CD8-positive, alpha-beta T cell (primary cell): ENCODE measurements at regions of chr9 and their contacts with region 1.

Region 1: DNA sequence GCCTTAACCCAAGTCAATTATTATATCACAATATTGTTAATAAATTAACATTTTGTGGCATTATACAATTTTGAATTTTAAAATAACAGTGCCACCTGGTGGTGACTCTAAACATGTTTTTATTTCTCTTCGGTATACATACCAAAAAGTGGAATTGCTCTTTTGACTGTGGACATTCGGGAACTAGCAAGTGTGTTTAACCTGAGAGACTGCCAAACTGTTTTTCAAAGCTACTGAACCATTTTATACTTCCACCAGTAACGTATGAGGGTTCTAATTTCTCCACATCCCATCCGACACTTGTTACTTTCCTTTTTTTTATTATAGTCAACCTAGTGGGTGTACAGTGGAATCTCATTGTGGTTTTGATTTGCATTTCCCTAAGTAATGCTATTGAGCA is 18.3 kb upstream of the HSDL2 start:
- DNase-seq: peak in 3 of 9 experiments; percentile 40 to 67 (median 59)
- ATAC-seq: no peak
- H3K4me3 ChIP-seq: no peak overlapping the region
- H3K4me3 Mint-ChIP-seq: no peak overlapping the region
- H3K27ac ChIP-seq: no peak overlapping the region
- H3K27ac Mint-ChIP-seq: no peak overlapping the region
- H3K4me1 ChIP-seq: no peaks in the 10 kb centered on the region
- H3K4me1 Mint-ChIP-seq: peaks cover 4% of the 10 kb centered on the region
- H3K27me3 ChIP-seq: no peaks in the 10 kb centered on the region
- H3K27me3 Mint-ChIP-seq: peaks cover 2% of the 10 kb centered on the region
- CTCF ChIP-seq: peak; percentile 78

Region 2: DNA sequence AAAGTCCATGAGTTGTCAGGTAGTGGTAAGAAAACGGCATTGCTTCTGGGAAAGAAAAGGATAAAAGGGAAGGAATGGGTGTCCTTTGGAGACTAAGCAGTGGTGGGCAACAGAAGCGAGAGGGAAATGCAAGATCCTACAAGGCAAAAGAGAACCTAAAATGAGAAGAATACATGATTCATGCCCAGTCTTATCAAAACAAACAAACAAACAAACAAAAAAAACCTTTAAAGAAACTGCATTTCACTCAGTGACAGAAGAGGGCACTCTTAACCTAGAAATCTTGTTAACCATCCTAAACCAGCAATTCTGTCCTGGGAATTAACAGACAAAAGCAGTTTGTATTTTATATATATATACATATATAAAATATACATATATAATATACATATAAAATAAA is 275.0 kb before region 1 on chr9:
- CTCF ChIA-PET with region 1: interaction called, 22 read pairs
- POLR2A ChIA-PET with region 1: no interaction called
- intact Hi-C with region 1: loop called (anchors 1 to 2 kb)
- DNase-seq: peak in 2 of 9 experiments; percentile 31 to 42
- ATAC-seq: no peak
- H3K4me3 ChIP-seq: no peak overlapping the region
- H3K4me3 Mint-ChIP-seq: no peak overlapping the region
- H3K27ac ChIP-seq: no peak overlapping the region
- H3K27ac Mint-ChIP-seq: no peak overlapping the region
- H3K4me1 ChIP-seq: no peaks in the 10 kb centered on the region
- H3K4me1 Mint-ChIP-seq: no peaks in the 10 kb centered on the region
- H3K27me3 ChIP-seq: no peaks in the 10 kb centered on the region
- H3K27me3 Mint-ChIP-seq: no peaks in the 10 kb centered on the region
- CTCF ChIP-seq: peak; percentile 55

Region 3: DNA sequence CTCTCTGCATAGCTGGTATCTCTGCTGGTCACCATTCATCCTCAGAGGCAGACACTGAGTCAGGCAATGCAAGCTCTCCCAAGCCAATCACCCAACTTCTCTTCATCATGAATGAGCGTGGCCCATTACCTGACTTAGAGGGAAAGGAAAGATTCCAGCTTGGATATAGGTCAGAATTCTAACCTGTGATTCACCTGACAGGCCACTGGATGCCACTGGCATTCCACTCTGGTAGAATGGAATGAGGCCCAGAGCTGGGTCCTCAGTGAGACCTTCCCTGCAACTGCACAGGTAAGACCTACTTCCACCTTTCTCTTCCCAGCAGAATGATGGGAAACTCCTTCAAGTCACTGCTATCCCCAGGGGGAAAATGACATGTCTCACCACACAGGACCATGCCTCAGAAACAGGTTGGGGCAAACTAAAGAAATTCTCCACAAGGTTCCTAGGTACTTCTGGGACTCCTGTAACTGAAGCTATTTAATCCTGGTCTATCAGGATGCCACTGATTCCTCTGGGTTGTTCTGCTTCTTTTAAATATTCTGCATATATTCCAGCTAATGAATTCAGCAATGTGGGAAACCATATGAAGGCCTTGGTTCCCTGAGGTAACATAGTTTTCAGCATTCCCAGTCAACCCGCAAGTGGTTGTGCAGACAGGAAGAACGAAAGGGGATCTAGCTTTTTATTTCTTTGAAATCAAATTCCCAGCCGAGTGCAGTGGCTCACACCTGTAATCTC is 248.5 kb before region 1 on chr9:
- CTCF ChIA-PET with region 1: interaction called, 61 read pairs
- POLR2A ChIA-PET with region 1: no interaction called
- intact Hi-C with region 1: loop called (anchors 1 kb)
- DNase-seq: peak in 4 of 9 experiments; percentile 13 to 50 (median 36)
- ATAC-seq: peak; percentile 48
- H3K4me3 ChIP-seq: no peak overlapping the region
- H3K4me3 Mint-ChIP-seq: no peak overlapping the region
- H3K27ac ChIP-seq: no peak overlapping the region
- H3K27ac Mint-ChIP-seq: no peak overlapping the region
- H3K4me1 ChIP-seq: no peaks in the 10 kb centered on the region
- H3K4me1 Mint-ChIP-seq: no peaks in the 10 kb centered on the region
- H3K27me3 ChIP-seq: no peaks in the 10 kb centered on the region
- H3K27me3 Mint-ChIP-seq: no peaks in the 10 kb centered on the region
- CTCF ChIP-seq: peak; percentile 55

Region 4: DNA sequence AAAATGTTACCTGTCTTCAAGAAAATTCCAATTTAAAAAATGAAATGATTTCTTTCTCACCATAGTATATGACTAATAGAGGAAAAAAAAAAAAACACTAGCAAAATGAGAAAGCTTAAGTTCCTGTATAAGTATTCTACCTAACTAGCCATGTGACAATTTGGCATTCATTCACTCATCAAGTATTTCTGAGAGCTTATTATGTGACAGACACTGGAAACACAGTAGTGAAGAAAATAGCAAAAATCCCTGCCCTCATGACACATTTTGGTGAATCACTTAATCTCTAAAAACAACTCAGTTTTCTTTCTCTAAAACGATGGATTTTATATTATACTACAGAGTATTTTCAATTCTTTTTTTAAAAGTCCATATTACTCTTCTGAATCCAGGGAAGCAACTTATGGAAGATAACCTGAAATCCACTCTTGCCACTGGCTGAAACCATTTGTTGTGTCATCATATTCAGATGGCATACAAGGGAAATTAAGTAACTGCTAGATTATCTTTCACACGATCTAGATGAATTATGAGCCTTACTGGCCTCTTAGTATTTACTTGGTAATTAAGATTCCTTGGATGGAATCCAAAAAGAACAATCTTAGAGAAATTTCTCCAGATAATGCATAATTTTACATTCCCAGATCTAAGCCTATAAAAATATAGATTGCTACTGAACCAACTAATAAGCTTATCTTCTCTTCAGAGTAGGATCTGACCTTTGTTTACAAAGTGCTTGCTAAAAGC is 33.7 kb before region 1 on chr9:
- CTCF ChIA-PET with region 1: interaction called, 6 read pairs
- POLR2A ChIA-PET with region 1: interaction called, 4 read pairs
- intact Hi-C with region 1: loop called in 1 of 2 experiments (anchors 5 kb)
- DNase-seq: peak in 1 of 9 experiments; percentile 39
- ATAC-seq: no peak
- H3K4me3 ChIP-seq: no peak overlapping the region
- H3K4me3 Mint-ChIP-seq: peak overlapping the region; percentile 3
- H3K27ac ChIP-seq: peak overlapping the region in 1 of 2 experiments; percentile 8
- H3K27ac Mint-ChIP-seq: peak overlapping the region; percentile 39
- H3K4me1 ChIP-seq: peaks cover 25% of the 10 kb centered on the region
- H3K4me1 Mint-ChIP-seq: peaks cover 80% of the 10 kb centered on the region
- H3K27me3 ChIP-seq: no peaks in the 10 kb centered on the region
- H3K27me3 Mint-ChIP-seq: no peaks in the 10 kb centered on the region
- CTCF ChIP-seq: no peak

Region 5: GRCh38 chr9:112379177-112380101 is 17.8 kb after region 1 on chr9:
- CTCF ChIA-PET with region 1: interaction called, 14 read pairs
- POLR2A ChIA-PET with region 1: interaction called, 7 read pairs
- intact Hi-C with region 1: loop called in 1 of 2 experiments (anchors 2 kb)
- DNase-seq: peak; percentile 93 to 99 (median 97)
- ATAC-seq: peak; percentile 95
- H3K4me3 ChIP-seq: peak overlapping the region; percentile 81 to 96
- H3K4me3 Mint-ChIP-seq: peak overlapping the region; percentile 99
- H3K27ac ChIP-seq: peak overlapping the region; percentile 77 to 92
- H3K27ac Mint-ChIP-seq: peak overlapping the region; percentile 96
- H3K4me1 ChIP-seq: peaks cover 27% of the 10 kb centered on the region
- H3K4me1 Mint-ChIP-seq: peaks cover 54% of the 10 kb centered on the region
- H3K27me3 ChIP-seq: no peaks in the 10 kb centered on the region
- H3K27me3 Mint-ChIP-seq: no peaks in the 10 kb centered on the region
- CTCF ChIP-seq: no peak